Spleen (tissue), 13 donors: ENCODE measurements at regions of chr3 and their contacts with region 1.

Region 1: DNA sequence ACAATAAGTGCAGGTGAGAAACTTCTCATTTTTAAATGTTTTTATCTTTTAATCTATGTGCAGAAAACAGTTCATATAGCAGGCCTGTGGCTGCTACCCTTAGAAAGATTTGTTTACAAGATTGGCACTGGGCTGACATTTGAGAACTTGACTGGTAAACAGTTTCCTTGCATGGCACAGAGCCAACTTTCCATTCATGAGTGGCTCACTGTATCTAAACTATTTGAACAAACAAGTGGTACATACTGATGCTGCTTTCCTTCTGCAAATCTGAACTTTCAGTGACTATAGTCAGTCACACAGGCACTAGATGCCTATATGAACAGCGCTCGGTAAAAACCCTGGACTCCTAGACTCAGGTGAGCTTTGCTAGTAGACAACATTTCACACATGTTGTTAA is 6.3 kb upstream of the GTPBP8 start:
- DNase-seq: no peak
- H3K4me3 ChIP-seq: no peak overlapping the region
- H3K27ac ChIP-seq: peak overlapping the region in 3 of 8 donors; percentile 2 to 54 (median 16)
- H3K4me1 ChIP-seq: peaks cover 3 to 29% (median 20%) of the 10 kb centered on the region in 6 donors
- H3K27me3 ChIP-seq: no peaks in the 10 kb centered on the region
- CTCF ChIP-seq: no peak
- POLR2A ChIP-seq: no peak

Region 2: GRCh38 chr3:112582244-112582874 is 402.1 kb before region 1 on chr3:
- intact Hi-C with region 1: loop called (anchors 10 kb)
- DNase-seq: no peak
- H3K4me3 ChIP-seq: no peak overlapping the region
- H3K27ac ChIP-seq: no peak overlapping the region
- H3K4me1 ChIP-seq: peaks cover 0 to 46% (median 20%) of the 10 kb centered on the region in 6 donors
- H3K27me3 ChIP-seq: no peaks in the 10 kb centered on the region
- CTCF ChIP-seq: peak in 6 of 11 experiments; percentile 36 to 51 (median 45)
- POLR2A ChIP-seq: no peak